Endothelial cell of umbilical vein (primary cell): ENCODE measurements at regions of chr11 and their contacts with region 1.

Region 1: GRCh38 chr11:112280268-112281126 is 19.8 kb upstream of the PLET1 start:
- DNase-seq: peak; percentile 79
- H3K4me3 ChIP-seq: peak overlapping the region; percentile 33 to 39 (median 38)
- H3K27ac ChIP-seq: no peak overlapping the region
- H3K4me1 ChIP-seq: peaks cover 6% of the 10 kb centered on the region
- H3K27me3 ChIP-seq: peaks cover 4 to 5% of the 10 kb centered on the region in 2 experiments
- CTCF ChIP-seq: peak; percentile 71 to 79
- POLR2A ChIP-seq: no peak

Region 2: DNA sequence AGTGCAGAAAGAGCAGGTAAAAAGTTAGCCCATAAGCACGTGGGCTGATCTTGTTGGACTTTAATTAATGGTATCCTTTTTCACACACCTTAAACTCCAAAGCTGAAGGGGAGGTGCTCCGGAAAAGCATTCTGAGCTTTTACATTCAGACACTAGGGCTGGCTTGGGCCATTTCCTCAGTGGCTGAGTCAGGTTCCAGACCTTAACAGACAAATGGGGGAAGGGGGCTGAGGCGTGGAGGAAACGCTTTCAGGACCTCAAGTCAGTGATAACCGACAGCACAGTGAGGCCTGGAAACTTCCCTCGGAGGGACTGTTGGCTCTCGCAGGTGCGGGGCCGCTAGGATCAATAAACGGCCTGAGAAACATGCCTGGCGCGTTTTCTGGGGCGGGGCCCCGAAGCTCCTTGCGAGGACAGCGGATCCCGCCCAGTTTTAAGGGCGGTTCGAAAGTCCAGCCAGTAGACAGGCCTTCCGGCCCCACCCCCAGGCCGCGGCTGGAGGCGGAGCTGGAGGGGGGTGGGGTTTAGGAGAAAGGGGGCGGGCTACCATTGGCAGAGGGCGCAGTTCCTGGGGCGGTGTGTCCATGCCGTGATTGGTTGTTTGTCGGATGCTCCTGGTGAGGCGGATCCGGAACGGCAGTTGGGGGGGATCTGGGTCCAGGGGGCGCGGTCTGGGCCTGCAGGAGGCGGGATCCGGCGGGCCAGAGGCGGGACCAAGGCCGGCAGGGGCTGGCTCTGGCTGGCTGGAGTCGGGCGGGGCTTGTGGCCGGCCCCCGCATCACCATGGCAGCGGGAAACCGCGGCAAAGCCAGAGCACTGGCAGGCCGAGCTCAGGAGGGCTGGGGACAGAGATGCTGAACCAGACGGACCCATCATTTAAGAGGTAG is 353.7 kb before region 1 on chr11:
- CTCF ChIA-PET with region 1: interaction called, 4 read pairs
- POLR2A ChIA-PET with region 1: no interaction called
- dilution Hi-C with region 1: no loop called
- intact Hi-C with region 1: loop called (anchors 2 kb)
- DNase-seq: peak; percentile 98
- H3K4me3 ChIP-seq: peak overlapping the region; percentile 38 to 66 (median 38)
- H3K27ac ChIP-seq: peak overlapping the region; percentile 98
- H3K4me1 ChIP-seq: peaks cover 28% of the 10 kb centered on the region
- H3K27me3 ChIP-seq: no peaks in the 10 kb centered on the region
- CTCF ChIP-seq: peak in 1 of 2 donors; percentile 20
- POLR2A ChIP-seq: peak; percentile 88

Region 3: DNA sequence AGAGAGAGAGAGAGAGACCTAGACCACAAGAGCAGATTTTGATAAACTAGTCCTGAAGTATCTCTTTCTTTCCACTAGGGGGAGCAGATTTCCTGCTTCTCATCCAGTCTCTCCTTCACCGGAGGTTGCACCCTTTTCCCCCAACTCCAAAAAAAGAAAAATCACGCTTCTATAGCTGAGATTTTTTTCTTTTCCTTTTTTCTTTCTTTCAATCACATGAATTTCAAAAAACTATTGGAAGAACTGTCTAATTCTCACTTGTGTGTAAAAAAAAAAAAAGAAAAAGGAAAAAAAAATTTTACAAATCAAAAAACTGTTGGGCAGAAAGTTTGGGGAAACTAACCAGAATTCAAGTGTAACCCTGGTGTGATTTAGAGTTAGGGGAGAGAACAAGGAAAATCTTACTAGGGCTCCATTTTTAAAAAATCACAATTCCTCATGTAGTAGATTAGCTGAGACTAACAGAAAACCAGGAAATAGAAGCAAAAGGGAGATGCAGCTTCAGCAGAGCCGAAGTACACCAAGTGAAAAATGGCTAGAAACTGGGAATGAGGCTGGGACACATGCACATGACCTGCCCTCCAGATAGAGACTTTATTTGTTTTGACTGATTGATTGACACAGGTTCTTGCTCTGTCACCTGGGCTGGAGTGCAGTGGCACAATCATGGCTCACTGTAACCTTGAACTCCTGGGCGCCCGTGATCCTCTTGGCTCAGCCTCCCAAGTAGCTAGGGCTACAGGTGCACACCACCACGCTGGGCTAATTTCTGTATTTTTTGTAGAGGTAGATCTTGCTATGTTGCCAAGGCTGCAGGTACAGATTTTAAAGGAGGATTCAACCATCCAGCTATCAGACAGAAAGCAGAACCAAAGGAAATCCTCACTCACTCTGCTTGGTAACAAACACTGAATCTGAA is 166.7 kb before region 1 on chr11:
- CTCF ChIA-PET with region 1: interaction called, 62 read pairs
- POLR2A ChIA-PET with region 1: no interaction called
- dilution Hi-C with region 1: no loop called
- intact Hi-C with region 1: loop called (anchors 1 kb)
- DNase-seq: peak; percentile 39
- H3K4me3 ChIP-seq: no peak overlapping the region
- H3K27ac ChIP-seq: no peak overlapping the region
- H3K4me1 ChIP-seq: no peaks in the 10 kb centered on the region
- H3K27me3 ChIP-seq: no peaks in the 10 kb centered on the region
- CTCF ChIP-seq: peak; percentile 41 to 65
- POLR2A ChIP-seq: no peak

Region 4: DNA sequence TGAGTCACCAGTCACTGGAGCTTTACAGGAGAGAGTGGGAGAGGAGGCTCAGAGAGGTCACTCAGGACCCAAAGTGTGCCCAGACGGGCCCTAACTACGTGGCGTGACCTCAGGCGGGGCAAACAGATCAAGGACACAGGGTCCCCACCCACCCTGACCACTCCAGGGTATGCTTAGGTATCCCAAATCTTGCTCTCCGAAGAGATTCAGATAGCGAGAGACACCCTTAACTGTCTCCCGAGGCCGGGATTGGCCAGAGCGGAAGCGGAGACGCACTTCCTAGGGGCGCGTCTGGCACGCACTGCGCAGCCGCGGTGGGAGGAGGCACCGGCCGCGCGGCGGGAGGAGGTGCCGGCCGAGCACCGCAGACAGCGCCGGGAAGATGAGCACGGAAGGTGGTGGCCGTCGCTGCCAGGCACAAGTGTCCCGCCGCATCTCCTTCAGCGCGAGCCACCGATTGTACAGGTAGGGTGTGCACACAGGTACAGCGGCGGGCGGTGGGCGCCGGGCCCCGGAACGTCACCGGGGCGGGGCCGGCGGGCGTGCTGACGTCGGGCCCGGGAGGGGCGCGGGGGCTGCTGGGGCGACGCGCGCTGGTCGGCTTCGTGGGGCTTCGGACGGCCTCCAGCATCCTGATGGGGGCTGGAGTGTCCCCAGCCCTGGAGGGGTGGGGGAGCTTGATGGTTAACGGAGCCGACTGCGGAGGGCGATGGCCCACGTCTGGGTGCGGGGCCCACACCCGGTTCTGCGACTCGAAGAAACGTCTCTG is 54.3 kb before region 1 on chr11 and contains the start of gene PTS:
- CTCF ChIA-PET with region 1: interaction called, 540 read pairs
- POLR2A ChIA-PET with region 1: interaction called, 6 read pairs
- dilution Hi-C with region 1: no loop called
- intact Hi-C with region 1: loop called (anchors 1 kb)
- DNase-seq: peak; percentile 87
- H3K4me3 ChIP-seq: peak within 1 kb of the TSS; percentile 30 to 77 (median 73)
- H3K27ac ChIP-seq: peak within 1 kb of the TSS; percentile 96
- H3K4me1 ChIP-seq: peaks cover 14% of the 10 kb centered on the region
- H3K27me3 ChIP-seq: no peaks in the 10 kb centered on the region
- CTCF ChIP-seq: no peak
- POLR2A ChIP-seq: peak; percentile 96
- total RNA-seq, gene PTS: 41.9 and 45.7 TPM in 2 replicates

Region 5: GRCh38 chr11:112255067-112255720 is 25.3 kb before region 1 on chr11:
- CTCF ChIA-PET with region 1: interaction called, 16 read pairs
- POLR2A ChIA-PET with region 1: no interaction called
- dilution Hi-C with region 1: no loop called
- intact Hi-C with region 1: loop called (anchors 2 kb)
- DNase-seq: peak; percentile 86
- H3K4me3 ChIP-seq: no peak overlapping the region
- H3K27ac ChIP-seq: peak overlapping the region; percentile 48
- H3K4me1 ChIP-seq: peaks cover 12% of the 10 kb centered on the region
- H3K27me3 ChIP-seq: no peaks in the 10 kb centered on the region
- CTCF ChIP-seq: no peak
- POLR2A ChIP-seq: no peak

Region 6: GRCh38 chr11:112355726-112356125 is 75.2 kb after region 1 on chr11:
- CTCF ChIA-PET with region 1: no interaction called
- POLR2A ChIA-PET with region 1: no interaction called
- dilution Hi-C with region 1: no loop called
- intact Hi-C with region 1: no loop called
- DNase-seq: no peak
- H3K4me3 ChIP-seq: no peak overlapping the region
- H3K27ac ChIP-seq: no peak overlapping the region
- H3K4me1 ChIP-seq: no peaks in the 10 kb centered on the region
- H3K27me3 ChIP-seq: no peaks in the 10 kb centered on the region
- CTCF ChIP-seq: peak in 1 of 2 donors; percentile 8
- POLR2A ChIP-seq: no peak

Region 7: DNA sequence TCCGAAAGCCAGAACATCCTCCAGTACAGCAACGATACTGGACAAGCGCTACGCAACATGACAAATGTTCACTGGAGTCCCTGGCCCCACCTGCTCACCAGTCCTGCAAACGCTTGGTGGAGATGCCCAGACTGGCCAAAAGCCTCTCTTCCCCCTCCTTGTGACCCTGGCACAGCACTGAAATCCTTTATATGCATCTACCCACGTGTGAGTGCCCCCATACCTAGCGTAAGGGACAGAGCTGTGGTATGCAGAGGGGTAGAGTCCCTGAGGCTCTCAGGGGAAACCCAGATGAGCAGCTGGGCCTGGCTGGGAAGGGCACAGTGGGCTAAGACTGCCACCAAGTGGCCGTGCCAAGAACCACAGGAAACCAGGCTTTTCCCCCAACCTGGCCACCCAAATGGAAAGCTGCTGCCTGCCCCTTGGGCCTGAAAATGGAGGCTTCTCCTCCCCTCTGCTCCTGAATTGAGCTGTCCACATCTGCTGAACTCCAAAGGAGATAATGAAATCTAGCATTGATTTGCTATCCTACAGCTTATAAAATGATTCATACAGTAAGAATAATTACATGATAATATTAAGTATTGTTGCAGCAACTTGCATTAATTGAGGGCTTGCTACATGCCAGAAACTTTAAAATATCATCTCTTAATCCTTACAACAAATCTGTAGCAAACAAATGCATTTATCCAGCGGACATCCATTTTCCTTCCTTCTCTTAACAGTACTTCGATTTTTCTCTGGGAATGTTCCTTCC is 1009.1 kb after region 1 on chr11:
- CTCF ChIA-PET with region 1: interaction called, 54 read pairs
- POLR2A ChIA-PET with region 1: no interaction called
- dilution Hi-C with region 1: no loop called
- intact Hi-C with region 1: no loop called
- DNase-seq: peak; percentile 59
- H3K4me3 ChIP-seq: no peak overlapping the region
- H3K27ac ChIP-seq: no peak overlapping the region
- H3K4me1 ChIP-seq: no peaks in the 10 kb centered on the region
- H3K27me3 ChIP-seq: no peaks in the 10 kb centered on the region
- CTCF ChIP-seq: peak; percentile 76 to 92
- POLR2A ChIP-seq: no peak